Astrocyte of the cerebellum (primary cell): ENCODE measurements at regions of chr11 and their contacts with region 1.

Region 1: GRCh38 chr11:78453140-78453935 is 35.7 kb upstream of the GAB2 start:
- DNase-seq: peak; percentile 27
- H3K4me3 ChIP-seq: no peak overlapping the region
- CTCF ChIP-seq: no peak

Region 2: DNA sequence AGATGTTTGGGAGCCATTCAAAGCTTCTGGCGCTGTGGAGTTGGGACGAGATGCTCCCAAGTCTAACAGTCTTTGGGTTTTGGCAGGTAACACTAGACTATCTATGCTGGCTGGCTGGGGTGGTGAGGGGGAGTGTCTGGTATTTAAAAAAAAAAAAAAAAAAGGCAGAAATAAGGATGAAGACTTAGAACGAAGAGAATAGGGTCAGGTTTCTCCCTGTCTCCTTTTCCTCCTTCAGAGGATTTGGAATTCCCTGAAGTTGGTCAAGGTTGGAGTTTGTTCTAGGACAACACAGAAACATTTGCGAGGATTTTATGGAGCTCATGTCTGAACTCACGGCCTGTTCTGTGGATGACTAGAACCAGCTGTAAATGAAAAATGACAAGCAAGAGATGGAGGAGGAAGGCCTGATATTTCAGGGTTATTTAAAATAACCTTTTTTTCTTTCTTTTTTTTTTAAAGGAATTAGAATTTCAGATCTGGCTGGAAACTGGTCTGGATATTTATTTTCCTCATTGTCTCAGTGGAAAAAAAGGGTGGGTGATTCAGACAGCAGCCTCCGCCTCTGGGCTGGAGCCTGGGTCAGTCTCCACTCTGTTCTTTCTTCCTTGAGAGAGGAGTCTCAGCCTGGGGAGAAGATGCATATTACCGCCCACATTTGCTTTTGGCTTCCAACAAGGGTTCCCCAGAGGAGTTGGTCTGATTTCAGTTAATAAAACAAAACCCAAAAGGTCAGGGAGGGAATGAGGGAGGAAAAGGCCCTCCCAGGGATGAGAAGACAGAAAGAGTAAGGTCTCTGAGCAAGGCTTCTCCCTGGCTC is 184.5 kb before region 1 on chr11:
- in situ Hi-C with region 1: no loop called
- DNase-seq: no peak
- H3K4me3 ChIP-seq: no peak overlapping the region
- CTCF ChIP-seq: no peak

Region 3: DNA sequence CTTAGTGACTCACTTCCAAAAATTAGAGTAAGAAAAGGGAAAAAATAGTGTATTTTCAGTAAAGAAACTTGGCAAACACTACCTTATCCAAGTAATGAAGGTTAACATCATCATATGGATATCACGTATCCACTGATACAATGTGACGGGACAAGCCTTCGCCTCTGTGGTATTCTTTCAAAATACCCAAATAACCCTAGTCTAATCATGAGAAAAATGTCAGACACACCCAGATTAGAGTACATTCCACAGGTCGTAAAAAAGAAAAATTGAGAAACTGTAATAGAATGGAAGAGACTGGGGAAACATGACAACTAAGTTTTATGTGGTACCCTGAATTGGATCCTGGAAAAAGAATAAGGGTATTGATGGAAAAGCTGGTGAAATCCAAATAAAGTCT is 72.4 kb after region 1 on chr11:
- in situ Hi-C with region 1: loop called (anchors 5 kb)
- DNase-seq: no peak
- H3K4me3 ChIP-seq: no peak overlapping the region
- CTCF ChIP-seq: no peak

Region 4: DNA sequence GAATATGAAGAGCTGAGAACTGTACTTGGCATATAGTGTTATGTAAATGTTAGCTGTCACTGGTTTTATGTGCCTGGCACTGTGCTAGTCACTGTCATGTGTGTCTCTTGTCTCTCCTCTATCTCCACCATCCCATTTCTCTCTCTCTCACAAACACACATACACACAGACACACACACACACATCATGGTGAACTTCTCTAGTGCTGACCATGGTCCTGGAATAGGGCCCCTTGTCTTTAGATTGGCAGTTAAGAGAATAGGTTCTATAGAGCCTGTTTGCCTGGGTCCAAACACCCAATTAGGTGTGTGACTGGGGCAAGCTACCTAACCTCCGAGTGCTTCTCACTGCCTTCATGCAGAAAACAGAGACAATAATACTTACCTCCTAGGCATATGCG is 231.0 kb after region 1 on chr11:
- in situ Hi-C with region 1: no loop called
- DNase-seq: no peak
- H3K4me3 ChIP-seq: no peak overlapping the region
- CTCF ChIP-seq: no peak